Activated naive CD8-positive, alpha-beta T cell treated with anti-CD3 and anti-CD28 coated beads, Interleukin-2, amount 10 ng/mL, durations not matched to agents 7 days and 5 days (primary cell): ENCODE measurements at regions of chr7 and their contacts with region 1.

Region 1: GRCh38 chr7:101085162-101085987 is at the start of gene TRIM56:
- DNase-seq: peak; percentile 84
- ATAC-seq: peak; percentile 93
- H3K4me3 Mint-ChIP-seq: peak within 1 kb of the TSS; percentile 99
- H3K27ac Mint-ChIP-seq: peak within 1 kb of the TSS; percentile 100
- H3K4me1 Mint-ChIP-seq: peaks cover 16% of the 10 kb centered on the region
- H3K27me3 Mint-ChIP-seq: peaks cover 5% of the 10 kb centered on the region
- total RNA-seq, gene TRIM56: 77.4 to 77.8 TPM

Region 2: GRCh38 chr7:100889761-100890634 is 195.4 kb before region 1 on chr7:
- POLR2A ChIA-PET with region 1: interaction called, 24 read pairs
- DNase-seq: peak; percentile 93
- ATAC-seq: peak; percentile 91
- H3K4me3 Mint-ChIP-seq: peak overlapping the region; percentile 85
- H3K27ac Mint-ChIP-seq: peak overlapping the region; percentile 69
- H3K4me1 Mint-ChIP-seq: peaks cover 36% of the 10 kb centered on the region
- H3K27me3 Mint-ChIP-seq: peaks cover 24% of the 10 kb centered on the region

Region 3: GRCh38 chr7:101126651-101127280 is 41.4 kb after region 1 on chr7 and contains the start of gene SERPINE1:
- POLR2A ChIA-PET with region 1: interaction called, 11 read pairs
- DNase-seq: peak; percentile 71
- ATAC-seq: peak; percentile 90
- H3K4me3 Mint-ChIP-seq: peak within 1 kb of the TSS; percentile 86
- H3K27ac Mint-ChIP-seq: peak within 1 kb of the TSS; percentile 74
- H3K4me1 Mint-ChIP-seq: peaks cover 47% of the 10 kb centered on the region
- H3K27me3 Mint-ChIP-seq: peaks cover 35% of the 10 kb centered on the region
- total RNA-seq, gene SERPINE1: 0.44 to 0.51 TPM